ENCODE measurements at regions of chrX and their contacts with region 1.

Region 1: GRCh38 chrX:1453951-1454785 is 1.5 kb upstream of the ASMTL start:
- DNase-seq: peak; percentile 91
- ATAC-seq: peak; percentile 26

Region 2: GRCh38 chrX:413322-414201 is 1040.6 kb before region 1 on chrX:
- intact Hi-C with region 1: loop called (anchors 10 kb)
- DNase-seq: peak; percentile 89
- ATAC-seq: peak; percentile 93

Region 3: DNA sequence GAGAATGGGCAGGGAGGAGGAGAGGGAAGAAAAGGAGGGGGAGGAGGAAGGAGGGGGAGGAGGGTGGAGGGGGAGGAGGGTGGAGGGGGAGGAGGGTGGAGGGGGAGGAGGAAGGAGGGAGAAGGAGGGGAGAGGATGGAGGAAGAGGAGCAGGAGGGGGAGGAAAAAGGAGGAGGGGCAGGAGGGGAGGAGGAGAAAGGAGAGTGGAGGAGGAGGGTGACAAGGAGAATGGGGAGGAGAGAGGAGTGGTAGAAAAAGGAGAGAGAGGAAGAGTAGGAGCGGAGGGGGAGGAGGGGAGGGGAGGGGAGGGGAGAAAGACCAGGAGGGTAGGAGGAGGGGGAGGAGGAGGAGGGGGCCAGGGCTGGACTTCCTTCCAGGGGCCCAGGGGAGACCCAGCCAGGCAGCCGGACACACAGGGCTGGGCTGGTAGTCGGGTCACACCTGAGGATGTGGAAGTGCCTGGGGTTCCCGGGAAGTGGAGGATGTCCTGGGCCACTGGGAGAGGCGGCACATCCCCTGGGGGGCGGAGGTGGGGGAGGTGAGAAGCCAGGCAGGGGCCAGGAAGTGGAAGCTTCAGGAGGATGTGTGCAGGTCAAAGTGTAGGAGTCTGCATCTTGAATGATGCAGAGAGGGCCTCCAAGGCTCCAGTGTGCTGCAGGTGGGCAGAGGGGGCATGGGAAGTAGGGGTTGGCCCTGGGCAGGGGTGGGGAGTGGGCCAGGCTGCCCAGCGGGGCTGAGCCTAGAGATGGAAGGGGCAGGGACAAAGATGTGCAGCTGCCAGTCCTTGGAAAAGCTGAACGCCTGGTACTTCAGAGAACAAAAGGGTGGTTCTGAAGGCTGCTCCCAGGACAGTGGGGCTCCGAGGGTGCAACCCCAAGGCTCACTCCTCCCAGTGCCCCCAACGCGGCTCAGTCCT is 98.8 kb before region 1 on chrX:
- intact Hi-C with region 1: no loop called
- DNase-seq: no peak
- ATAC-seq: peak; percentile 20

Region 4: GRCh38 chrX:1580735-1581531 is 126.8 kb after region 1 on chrX:
- intact Hi-C with region 1: loop called (anchors 2 kb)
- DNase-seq: no peak
- ATAC-seq: peak; percentile 44

Region 5: GRCh38 chrX:1591102-1591900 is 137.1 kb after region 1 on chrX and contains the start of gene AKAP17A:
- intact Hi-C with region 1: loop called (anchors 5 kb)
- DNase-seq: peak; percentile 96
- ATAC-seq: peak; percentile 96
- total RNA-seq, gene AKAP17A: 13.8 TPM

Region 6: GRCh38 chrX:2608638-2609430 is 1154.7 kb after region 1 on chrX:
- intact Hi-C with region 1: loop called (anchors 5 kb)
- DNase-seq: peak; percentile 95
- ATAC-seq: peak; percentile 99

Measured in Right ventricle myocardium inferior (tissue), 1 donor.